ENCODE measurements at regions of chr14 and their contacts with region 1.

Region 1: DNA sequence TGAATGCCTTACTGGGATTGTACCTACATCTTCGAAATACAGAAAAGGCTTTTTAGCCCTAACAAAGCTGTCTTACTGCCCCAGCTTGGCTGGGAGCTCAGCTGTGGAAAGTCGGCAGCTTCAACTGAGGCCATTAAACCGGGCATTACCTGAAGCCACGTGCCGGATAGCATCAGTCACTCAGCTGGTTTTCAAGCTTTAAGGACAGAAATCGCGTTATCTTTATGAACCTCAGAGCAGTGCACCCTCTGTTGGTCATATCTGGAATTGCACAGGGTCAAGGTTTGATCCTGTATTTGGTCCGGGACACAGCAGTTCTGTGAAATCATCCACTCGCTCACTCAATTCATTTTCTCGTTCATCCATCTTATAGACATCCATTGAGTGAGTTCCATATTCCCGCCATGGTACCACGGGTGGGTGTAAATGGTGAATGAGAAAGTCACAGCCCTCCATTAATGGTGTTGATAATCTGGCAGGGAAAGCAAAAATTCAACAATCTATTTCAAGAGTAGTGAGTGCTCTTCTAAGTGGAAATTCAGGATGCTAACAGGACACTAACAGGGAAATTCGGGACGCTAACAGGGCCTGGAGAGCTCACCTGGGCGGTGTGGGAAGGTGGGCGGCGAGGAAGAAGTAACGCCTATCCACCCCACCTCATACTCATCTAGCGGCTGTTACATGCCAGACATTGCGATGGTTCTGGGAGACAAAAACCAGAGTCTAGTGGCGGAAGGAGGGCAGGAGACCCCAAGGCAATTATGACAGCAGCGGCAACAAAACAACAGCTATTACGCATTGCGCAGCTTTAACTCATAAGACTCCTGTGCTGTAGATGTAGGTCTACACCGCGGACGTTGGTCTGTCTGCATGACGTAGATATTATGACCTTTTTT is 60.6 kb upstream of the TCL1A start:
- DNase-seq: peak; percentile 68
- H3K4me3 ChIP-seq: no peak overlapping the region
- H3K27ac ChIP-seq: no peak overlapping the region
- H3K4me1 ChIP-seq: no peaks in the 10 kb centered on the region; a peak in 1 of 4 replicates
- H3K27me3 ChIP-seq: no peaks in the 10 kb centered on the region
- CTCF ChIP-seq: peak; percentile 82
- EP300 ChIP-seq: no peak
- RAD21 ChIP-seq: peak; percentile 74

Region 2: DNA sequence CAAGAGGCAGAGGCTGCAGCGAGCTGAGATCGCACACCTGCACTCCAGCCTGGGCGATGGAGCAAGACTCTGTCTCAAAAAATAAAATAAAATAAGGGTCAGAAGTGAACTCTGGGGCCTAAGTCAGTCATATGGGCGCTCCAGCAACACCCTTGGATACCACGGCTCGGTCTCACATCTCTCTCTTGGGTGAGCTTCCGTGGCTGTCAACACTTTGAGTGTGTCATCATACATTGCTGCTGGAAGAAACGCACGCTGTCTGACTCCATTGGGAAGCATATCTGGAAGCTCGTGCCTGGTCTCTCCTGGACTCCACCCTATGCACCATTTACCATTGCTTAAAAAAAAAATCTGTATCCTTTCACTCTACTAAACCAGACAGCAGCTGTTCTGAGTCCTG is 219.5 kb before region 1 on chr14:
- CTCF ChIA-PET with region 1: interaction called, 67 read pairs
- POLR2A ChIA-PET with region 1: no interaction called
- DNase-seq: no peak
- H3K4me3 ChIP-seq: no peak overlapping the region
- H3K27ac ChIP-seq: no peak overlapping the region
- H3K4me1 ChIP-seq: no peaks in the 10 kb centered on the region
- H3K27me3 ChIP-seq: no peaks in the 10 kb centered on the region
- CTCF ChIP-seq: no peak
- EP300 ChIP-seq: no peak
- RAD21 ChIP-seq: no peak

Region 3: DNA sequence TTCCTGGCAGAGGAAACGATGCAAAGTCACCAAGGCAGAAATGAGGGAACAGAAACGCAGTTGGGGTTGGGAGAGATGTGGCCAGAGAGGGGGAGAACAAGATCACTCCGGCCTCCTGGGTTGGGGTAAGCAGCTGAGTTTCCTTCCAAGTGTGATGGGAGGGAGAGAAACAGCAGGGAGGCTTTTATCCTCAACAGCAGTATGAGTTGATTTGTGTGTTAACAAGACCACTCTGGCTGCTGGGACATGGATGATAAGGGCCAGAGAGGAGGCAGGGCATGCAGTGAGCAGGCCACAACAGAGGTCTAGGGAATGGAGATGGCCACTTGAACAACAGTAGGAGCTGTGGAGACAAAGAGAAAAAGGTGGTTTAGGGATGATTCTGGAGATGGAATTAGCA is 172.9 kb before region 1 on chr14:
- CTCF ChIA-PET with region 1: interaction called, 44 read pairs
- POLR2A ChIA-PET with region 1: no interaction called
- DNase-seq: no peak
- H3K4me3 ChIP-seq: no peak overlapping the region
- H3K27ac ChIP-seq: no peak overlapping the region
- H3K4me1 ChIP-seq: peaks cover 0 to 5% of the 10 kb centered on the region in 2 experiments; a peak in 1 of 4 replicates
- H3K27me3 ChIP-seq: no peaks in the 10 kb centered on the region
- CTCF ChIP-seq: no peak
- EP300 ChIP-seq: no peak
- RAD21 ChIP-seq: no peak

Region 4: GRCh38 chr14:95652690-95653089 is 121.8 kb before region 1 on chr14:
- CTCF ChIA-PET with region 1: no interaction called
- POLR2A ChIA-PET with region 1: no interaction called
- DNase-seq: no peak
- H3K4me3 ChIP-seq: no peak overlapping the region
- H3K27ac ChIP-seq: no peak overlapping the region
- H3K4me1 ChIP-seq: no peaks in the 10 kb centered on the region
- H3K27me3 ChIP-seq: no peaks in the 10 kb centered on the region
- CTCF ChIP-seq: no peak
- EP300 ChIP-seq: no peak
- RAD21 ChIP-seq: no peak

Region 5: GRCh38 chr14:95759941-95760340 is 14.6 kb before region 1 on chr14:
- CTCF ChIA-PET with region 1: interaction called, 47 read pairs
- POLR2A ChIA-PET with region 1: no interaction called
- DNase-seq: peak; percentile 24
- H3K4me3 ChIP-seq: no peak overlapping the region
- H3K27ac ChIP-seq: no peak overlapping the region
- H3K4me1 ChIP-seq: peaks cover 0 to 17% of the 10 kb centered on the region in 2 experiments; a peak in 1 of 4 replicates
- H3K27me3 ChIP-seq: no peaks in the 10 kb centered on the region
- CTCF ChIP-seq: no peak
- EP300 ChIP-seq: no peak
- RAD21 ChIP-seq: no peak

Region 6: GRCh38 chr14:95993768-95994592 is 219.5 kb after region 1 on chr14:
- CTCF ChIA-PET with region 1: interaction called, 19 read pairs
- POLR2A ChIA-PET with region 1: no interaction called
- DNase-seq: peak; percentile 47
- H3K4me3 ChIP-seq: peak overlapping the region in 1 of 2 experiments; percentile 36; a peak in 1 of 4 replicates
- H3K27ac ChIP-seq: no peak overlapping the region
- H3K4me1 ChIP-seq: no peaks in the 10 kb centered on the region
- H3K27me3 ChIP-seq: no peaks in the 10 kb centered on the region
- CTCF ChIP-seq: peak; percentile 93
- EP300 ChIP-seq: no peak
- RAD21 ChIP-seq: peak; percentile 95

Region 7: GRCh38 chr14:96027431-96028355 is 253.2 kb after region 1 on chr14:
- CTCF ChIA-PET with region 1: no interaction called
- POLR2A ChIA-PET with region 1: no interaction called
- DNase-seq: no peak
- H3K4me3 ChIP-seq: no peak overlapping the region
- H3K27ac ChIP-seq: no peak overlapping the region
- H3K4me1 ChIP-seq: peaks cover 0 to 8% of the 10 kb centered on the region in 2 experiments; a peak in 1 of 4 replicates
- H3K27me3 ChIP-seq: no peaks in the 10 kb centered on the region
- CTCF ChIP-seq: no peak
- EP300 ChIP-seq: no peak
- RAD21 ChIP-seq: no peak